CD4-positive, alpha-beta T cell (primary cell): ENCODE measurements at regions of chr3 and their contacts with region 1.

Region 1: DNA sequence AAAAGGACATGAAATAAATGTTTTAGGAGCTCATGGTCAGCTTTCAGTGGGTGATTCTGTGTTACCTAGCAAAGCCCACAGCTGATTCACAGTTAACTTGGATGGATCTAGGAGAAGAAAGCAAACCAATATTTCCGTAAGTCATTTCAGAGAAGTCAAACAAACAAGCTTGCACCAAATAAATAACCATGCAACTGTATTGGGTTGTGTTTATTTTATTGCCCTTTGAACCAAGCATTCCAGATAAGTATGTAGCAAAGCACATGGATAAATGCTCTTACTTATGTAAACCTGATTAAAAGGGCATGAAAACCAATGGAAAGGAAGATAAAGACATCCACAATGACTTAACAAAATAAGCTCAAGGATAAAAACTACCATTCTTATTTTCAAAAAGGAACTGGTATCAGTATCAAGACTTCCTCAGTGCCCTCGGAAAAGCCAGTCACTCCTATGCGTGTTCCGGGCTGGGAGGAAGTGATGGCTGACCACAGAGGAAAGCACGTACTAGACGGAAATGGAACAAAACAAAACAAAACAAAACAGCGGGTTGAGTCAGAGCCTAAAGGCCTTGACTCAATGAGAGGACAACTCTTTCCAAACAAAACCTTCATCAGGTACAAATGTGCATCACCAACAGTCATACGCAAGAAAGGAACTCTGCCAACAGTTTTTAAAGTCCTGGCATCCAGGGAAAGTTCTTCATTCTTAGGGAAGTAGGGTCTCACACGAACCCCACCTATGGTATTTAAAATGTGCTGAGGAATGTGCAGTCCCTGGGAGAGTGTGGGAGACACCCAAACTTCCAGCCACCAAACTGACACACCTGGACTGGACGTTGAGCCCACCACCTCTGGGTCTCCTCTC is 103.3 kb downstream of the SNRK start:
- DNase-seq: peak; percentile 54 to 93 (median 68)
- ATAC-seq: peak; percentile 94
- H3K4me3 ChIP-seq: peak overlapping the region; percentile 1
- H3K4me3 Mint-ChIP-seq: peak overlapping the region; percentile 49
- H3K27ac ChIP-seq: peak overlapping the region; percentile 53 to 83
- H3K27ac Mint-ChIP-seq: peak overlapping the region; percentile 88
- H3K4me1 ChIP-seq: peaks cover 64% of the 10 kb centered on the region
- H3K4me1 Mint-ChIP-seq: peaks cover 83% of the 10 kb centered on the region
- H3K27me3 ChIP-seq: no peaks in the 10 kb centered on the region
- H3K27me3 Mint-ChIP-seq: no peaks in the 10 kb centered on the region
- CTCF ChIP-seq: no peak

Region 2: DNA sequence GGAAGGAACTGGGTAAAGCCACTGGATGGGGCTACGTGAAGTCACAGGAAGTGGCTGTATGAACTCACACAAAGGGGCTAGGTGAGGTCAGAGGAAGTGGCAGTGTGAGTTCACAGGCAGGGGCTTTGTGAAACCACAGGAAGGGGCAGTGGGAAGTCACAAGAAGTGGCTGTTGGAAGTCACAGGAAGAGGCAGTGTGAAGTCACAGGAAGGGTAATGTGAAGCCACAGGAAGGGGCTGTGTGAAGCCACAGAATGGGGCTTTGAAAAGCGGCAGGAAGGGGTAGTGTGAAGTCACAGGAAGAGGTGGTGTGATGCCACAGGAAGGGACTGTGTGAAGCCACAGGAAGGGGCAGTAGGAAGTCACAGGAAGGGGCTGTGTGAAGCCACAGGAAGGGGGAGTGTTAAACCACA is 375.9 kb before region 1 on chr3:
- CTCF ChIA-PET with region 1: no interaction called
- POLR2A ChIA-PET with region 1: no interaction called
- intact Hi-C with region 1: loop called in 1 of 2 experiments (anchors 10 kb)
- DNase-seq: peak in 4 of 14 experiments; percentile 22 to 75 (median 58)
- ATAC-seq: peak; percentile 32
- H3K4me3 ChIP-seq: no peak overlapping the region
- H3K4me3 Mint-ChIP-seq: no peak overlapping the region
- H3K27ac ChIP-seq: peak overlapping the region; percentile 34 to 81
- H3K27ac Mint-ChIP-seq: no peak overlapping the region
- H3K4me1 ChIP-seq: peaks cover 47% of the 10 kb centered on the region
- H3K4me1 Mint-ChIP-seq: no peaks in the 10 kb centered on the region
- H3K27me3 ChIP-seq: no peaks in the 10 kb centered on the region
- H3K27me3 Mint-ChIP-seq: no peaks in the 10 kb centered on the region
- CTCF ChIP-seq: no peak

Region 3: GRCh38 chr3:43345877-43346276 is 43.7 kb before region 1 on chr3:
- CTCF ChIA-PET with region 1: no interaction called
- POLR2A ChIA-PET with region 1: interaction called, 38 read pairs
- intact Hi-C with region 1: loop called (anchors 5 kb)
- DNase-seq: no peak
- ATAC-seq: no peak
- H3K4me3 ChIP-seq: no peak overlapping the region
- H3K4me3 Mint-ChIP-seq: peak overlapping the region; percentile 58
- H3K27ac ChIP-seq: peak overlapping the region; percentile 36 to 62
- H3K27ac Mint-ChIP-seq: peak overlapping the region; percentile 96
- H3K4me1 ChIP-seq: peaks cover 71% of the 10 kb centered on the region
- H3K4me1 Mint-ChIP-seq: peaks cover 91% of the 10 kb centered on the region
- H3K27me3 ChIP-seq: no peaks in the 10 kb centered on the region
- H3K27me3 Mint-ChIP-seq: no peaks in the 10 kb centered on the region
- CTCF ChIP-seq: no peak

Region 4: GRCh38 chr3:43378066-43378935 is 11.3 kb before region 1 on chr3:
- CTCF ChIA-PET with region 1: interaction called, 7 read pairs
- POLR2A ChIA-PET with region 1: interaction called, 13 read pairs
- intact Hi-C with region 1: no loop called
- DNase-seq: peak; percentile 62 to 86 (median 68)
- ATAC-seq: peak; percentile 99
- H3K4me3 ChIP-seq: no peak overlapping the region
- H3K4me3 Mint-ChIP-seq: no peak overlapping the region
- H3K27ac ChIP-seq: no peak overlapping the region
- H3K27ac Mint-ChIP-seq: peak overlapping the region; percentile 50
- H3K4me1 ChIP-seq: peaks cover 16% of the 10 kb centered on the region
- H3K4me1 Mint-ChIP-seq: peaks cover 17% of the 10 kb centered on the region
- H3K27me3 ChIP-seq: no peaks in the 10 kb centered on the region
- H3K27me3 Mint-ChIP-seq: no peaks in the 10 kb centered on the region
- CTCF ChIP-seq: peak; percentile 86

Region 5: DNA sequence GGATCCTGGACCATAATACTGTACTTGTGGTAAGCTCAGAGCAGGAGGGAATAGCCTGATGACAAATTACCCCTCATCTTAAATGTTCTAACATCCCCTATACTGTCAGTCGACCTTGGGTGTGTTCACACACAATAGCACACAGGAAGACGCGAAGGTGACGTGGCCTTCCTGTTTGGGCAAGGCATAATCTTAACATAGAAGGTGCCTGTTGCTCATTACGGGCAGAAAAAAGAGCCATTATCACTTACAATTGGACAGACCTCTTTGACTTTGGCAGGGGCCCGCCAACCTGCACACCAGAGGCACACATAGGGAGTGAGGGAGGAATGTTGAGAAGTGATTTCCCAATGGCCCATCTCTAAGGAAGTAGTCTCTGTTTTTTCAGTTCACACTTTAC is 88.0 kb after region 1 on chr3:
- CTCF ChIA-PET with region 1: interaction called, 4 read pairs
- POLR2A ChIA-PET with region 1: interaction called, 5 read pairs
- intact Hi-C with region 1: loop called in 1 of 2 experiments (anchors 2 kb)
- DNase-seq: peak; percentile 52 to 90 (median 67)
- ATAC-seq: peak; percentile 96
- H3K4me3 ChIP-seq: no peak overlapping the region
- H3K4me3 Mint-ChIP-seq: peak overlapping the region; percentile 39
- H3K27ac ChIP-seq: peak overlapping the region; percentile 77 to 94
- H3K27ac Mint-ChIP-seq: peak overlapping the region; percentile 96
- H3K4me1 ChIP-seq: peaks cover 28% of the 10 kb centered on the region
- H3K4me1 Mint-ChIP-seq: peaks cover 64% of the 10 kb centered on the region
- H3K27me3 ChIP-seq: no peaks in the 10 kb centered on the region
- H3K27me3 Mint-ChIP-seq: no peaks in the 10 kb centered on the region
- CTCF ChIP-seq: no peak

Region 6: DNA sequence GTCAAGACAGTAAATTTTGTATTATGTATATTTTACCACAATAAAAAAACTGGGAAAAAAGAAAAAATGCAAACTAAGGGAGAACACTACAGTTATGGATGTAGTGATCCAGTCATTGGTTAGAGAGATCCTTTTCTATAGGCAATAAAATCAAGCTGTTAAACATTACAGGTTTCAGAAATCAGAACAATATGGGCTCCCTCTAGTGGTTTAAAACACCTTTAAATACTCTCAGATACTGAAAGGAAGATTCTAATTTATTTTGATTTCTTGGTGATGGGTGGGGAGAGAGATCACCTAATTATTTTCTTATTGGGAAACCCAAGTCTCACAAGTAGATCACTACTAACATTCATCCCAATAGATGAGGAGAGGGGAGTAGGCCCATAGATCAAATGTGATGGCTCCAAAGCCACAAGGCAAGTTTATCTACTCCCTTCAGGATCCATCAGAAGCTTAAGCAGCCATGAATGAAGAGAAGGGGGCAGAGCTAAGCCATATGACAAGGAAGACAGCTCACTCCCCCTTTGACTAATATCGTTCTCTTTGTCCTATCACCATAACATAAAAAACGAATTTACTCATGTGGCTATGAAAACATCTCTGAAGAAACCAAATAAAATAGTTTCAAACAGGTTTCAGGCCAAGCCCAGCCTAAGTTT is 113.6 kb after region 1 on chr3:
- CTCF ChIA-PET with region 1: interaction called, 7 read pairs
- POLR2A ChIA-PET with region 1: interaction called, 14 read pairs
- intact Hi-C with region 1: loop called in 1 of 2 experiments (anchors 2 kb)
- DNase-seq: peak in 3 of 14 experiments; percentile 64 to 71 (median 67)
- ATAC-seq: peak; percentile 63
- H3K4me3 ChIP-seq: no peak overlapping the region
- H3K4me3 Mint-ChIP-seq: no peak overlapping the region
- H3K27ac ChIP-seq: no peak overlapping the region
- H3K27ac Mint-ChIP-seq: peak overlapping the region; percentile 31
- H3K4me1 ChIP-seq: peaks cover 26% of the 10 kb centered on the region
- H3K4me1 Mint-ChIP-seq: peaks cover 50% of the 10 kb centered on the region
- H3K27me3 ChIP-seq: no peaks in the 10 kb centered on the region
- H3K27me3 Mint-ChIP-seq: no peaks in the 10 kb centered on the region
- CTCF ChIP-seq: peak; percentile 68

Region 7: GRCh38 chr3:43978708-43979107 is 589.1 kb after region 1 on chr3:
- CTCF ChIA-PET with region 1: no interaction called
- POLR2A ChIA-PET with region 1: no interaction called
- intact Hi-C with region 1: no loop called
- DNase-seq: no peak
- ATAC-seq: no peak
- H3K4me3 ChIP-seq: no peak overlapping the region
- H3K4me3 Mint-ChIP-seq: no peak overlapping the region
- H3K27ac ChIP-seq: no peak overlapping the region
- H3K27ac Mint-ChIP-seq: no peak overlapping the region
- H3K4me1 ChIP-seq: no peaks in the 10 kb centered on the region
- H3K4me1 Mint-ChIP-seq: no peaks in the 10 kb centered on the region
- H3K27me3 ChIP-seq: no peaks in the 10 kb centered on the region
- H3K27me3 Mint-ChIP-seq: peaks cover 57% of the 10 kb centered on the region
- CTCF ChIP-seq: no peak